BJ (cell line): ENCODE measurements at regions of chr5 and their contacts with region 1.

Region 1: GRCh38 chr5:35061211-35061770 is 13.5 kb upstream of the AGXT2 start:
- DNase-seq: no peak
- H3K4me3 ChIP-seq: no peak overlapping the region
- H3K27me3 ChIP-seq: no peaks in the 10 kb centered on the region
- CTCF ChIP-seq: no peak

Region 2: GRCh38 chr5:35046774-35047173 is 14.5 kb before region 1 on chr5:
- CTCF ChIA-PET with region 1: interaction called, 3 read pairs
- POLR2A ChIA-PET with region 1: interaction called, 14 read pairs
- DNase-seq: peak; percentile 85
- H3K4me3 ChIP-seq: no peak overlapping the region
- H3K27me3 ChIP-seq: no peaks in the 10 kb centered on the region
- CTCF ChIP-seq: no peak

Region 3: GRCh38 chr5:35096216-35096615 is 34.9 kb after region 1 on chr5:
- CTCF ChIA-PET with region 1: no interaction called
- POLR2A ChIA-PET with region 1: no interaction called
- DNase-seq: no peak
- H3K4me3 ChIP-seq: no peak overlapping the region
- H3K27me3 ChIP-seq: no peaks in the 10 kb centered on the region
- CTCF ChIP-seq: no peak

Region 4: DNA sequence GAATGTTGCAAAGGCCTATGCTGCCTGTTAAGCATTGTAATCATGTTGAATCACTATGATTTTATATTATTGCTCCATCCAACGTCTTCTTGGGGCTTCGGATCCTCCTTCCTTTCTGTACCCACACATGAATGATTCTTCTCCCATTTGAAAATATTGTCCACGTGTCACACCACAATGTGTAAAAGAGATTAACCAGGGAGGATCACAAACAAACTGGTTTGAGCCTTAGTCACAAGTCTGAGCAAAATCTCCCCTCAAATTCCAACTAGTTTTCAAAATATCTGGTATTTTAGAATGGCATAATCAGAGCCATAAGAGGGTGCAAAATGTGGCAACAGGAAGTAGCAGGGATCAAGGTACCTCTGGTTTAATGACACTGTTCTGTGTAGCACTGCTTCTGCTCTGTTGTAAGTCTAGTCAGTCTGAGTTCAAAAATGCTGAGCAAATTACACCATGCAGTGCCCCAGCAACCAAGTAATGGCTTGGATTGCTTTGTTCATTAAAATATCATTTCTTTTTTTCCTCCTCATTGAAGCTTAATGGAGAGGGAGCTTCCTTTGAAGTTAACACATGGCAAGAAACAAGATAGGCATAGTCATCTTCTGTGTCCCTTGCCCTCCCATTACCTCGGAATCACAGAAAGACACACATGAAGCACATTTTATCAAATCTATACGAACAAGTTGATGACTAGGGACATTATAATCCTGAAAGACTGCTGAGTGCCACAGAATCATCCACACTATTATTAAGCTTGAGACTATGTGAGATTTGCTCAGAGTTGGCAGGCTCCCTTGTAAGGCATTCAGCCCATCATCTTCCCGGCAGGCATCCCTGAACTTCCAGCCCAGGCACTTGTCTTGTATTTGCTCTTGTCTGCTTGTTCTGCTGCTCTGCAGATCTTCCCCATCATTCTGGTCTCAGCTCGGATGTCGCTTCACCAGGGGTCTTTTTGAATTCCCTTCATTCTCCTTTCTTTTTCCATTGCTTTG is 271.0 kb after region 1 on chr5:
- CTCF ChIA-PET with region 1: no interaction called
- POLR2A ChIA-PET with region 1: no interaction called
- DNase-seq: no peak
- H3K4me3 ChIP-seq: no peak overlapping the region
- H3K27me3 ChIP-seq: no peaks in the 10 kb centered on the region
- CTCF ChIP-seq: no peak

Region 5: GRCh38 chr5:35365758-35366157 is 304.5 kb after region 1 on chr5:
- CTCF ChIA-PET with region 1: no interaction called
- POLR2A ChIA-PET with region 1: no interaction called
- DNase-seq: no peak
- H3K4me3 ChIP-seq: no peak overlapping the region
- H3K27me3 ChIP-seq: no peaks in the 10 kb centered on the region
- CTCF ChIP-seq: no peak